Activated CD4-positive, alpha-beta T cell treated with anti-CD3 and anti-CD28 coated beads for 36 hours (primary cell): ENCODE measurements at regions of chr11 and their contacts with region 1.

Region 1: GRCh38 chr11:75133976-75134375 is 16.9 kb upstream of the SLCO2B1 start:
- DNase-seq: no peak
- ATAC-seq: no peak
- H3K4me3 Mint-ChIP-seq: no peak overlapping the region
- H3K27ac Mint-ChIP-seq: no peak overlapping the region
- H3K4me1 Mint-ChIP-seq: no peaks in the 10 kb centered on the region
- H3K27me3 Mint-ChIP-seq: peaks cover 13% of the 10 kb centered on the region

Region 2: DNA sequence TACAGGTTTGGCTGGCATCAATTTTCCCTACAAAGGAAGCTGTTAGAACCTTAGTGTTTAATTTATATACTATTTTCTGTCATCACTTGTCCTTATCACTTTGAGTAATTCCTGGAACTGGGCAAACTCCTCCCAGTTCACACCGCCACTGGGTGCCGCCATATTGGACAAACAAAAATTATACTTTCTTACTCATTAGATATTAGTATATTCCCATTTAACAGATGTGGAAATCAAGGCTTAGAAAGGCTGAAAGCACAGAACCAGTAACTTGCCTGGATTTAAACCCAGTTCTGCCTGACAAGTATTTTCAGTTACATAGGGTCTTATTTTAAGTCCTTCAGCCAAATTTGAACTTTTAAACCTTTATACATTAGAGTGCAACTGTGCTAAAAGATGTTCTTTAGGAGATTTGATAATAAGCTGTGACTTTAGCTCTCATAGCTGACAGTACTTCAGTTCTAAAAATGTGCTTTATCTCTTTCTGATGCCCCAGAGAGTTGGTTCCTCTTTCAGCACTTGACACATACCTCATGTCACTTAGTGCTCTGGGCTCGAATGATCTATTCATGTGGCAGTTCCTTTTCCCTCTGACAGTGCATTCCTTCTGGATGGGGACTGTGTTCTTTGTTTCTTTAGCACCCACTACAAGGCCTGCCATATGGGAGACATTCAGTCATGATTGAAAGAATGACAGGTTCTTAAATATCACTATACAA is 1282.8 kb before region 1 on chr11:
- CTCF ChIA-PET with region 1: no interaction called
- POLR2A ChIA-PET with region 1: no interaction called
- intact Hi-C with region 1: loop called in 1 of 2 experiments (anchors 5 kb)
- DNase-seq: no peak
- ATAC-seq: no peak
- H3K4me3 Mint-ChIP-seq: no peak overlapping the region
- H3K27ac Mint-ChIP-seq: no peak overlapping the region
- H3K4me1 Mint-ChIP-seq: no peaks in the 10 kb centered on the region
- H3K27me3 Mint-ChIP-seq: no peaks in the 10 kb centered on the region